ENCODE measurements at regions of chr7 and their contacts with region 1.

Region 1: GRCh38 chr7:113118074-113118959 is at the start of gene SMIM30:
- DNase-seq: peak; percentile 90 to 95
- ATAC-seq: peak; percentile 99 to 100 (median 100)
- H3K4me3 ChIP-seq: peak within 1 kb of the TSS; percentile 36 to 76 (median 62)
- H3K27ac ChIP-seq: peak within 1 kb of the TSS; percentile 65 to 90 (median 80)
- H3K4me1 ChIP-seq: peaks cover 0 to 36% (median 10%) of the 10 kb centered on the region in 9 donors
- H3K27me3 ChIP-seq: no peaks in the 10 kb centered on the region
- CTCF ChIP-seq: peak in 1 of 9 donors; percentile 15
- total RNA-seq, gene SMIM30: 87.2 to 190 (median 164) TPM

Region 2: GRCh38 chr7:112571852-112572607 is 546.3 kb before region 1 on chr7:
- intact Hi-C with region 1: loop called in 1 of 10 experiments (anchors 2 kb)
- DNase-seq: no peak
- ATAC-seq: peak in 5 of 8 donors; percentile 38 to 62 (median 54)
- H3K4me3 ChIP-seq: no peak overlapping the region
- H3K27ac ChIP-seq: peak overlapping the region in 7 of 10 donors; percentile 43 to 83 (median 65)
- H3K4me1 ChIP-seq: peaks cover 0 to 38% (median 19%) of the 10 kb centered on the region in 9 donors
- H3K27me3 ChIP-seq: no peaks in the 10 kb centered on the region
- CTCF ChIP-seq: peak in 2 of 9 donors; percentile 41 to 45

Region 3: GRCh38 chr7:112789817-112790585 is 328.3 kb before region 1 on chr7 and contains the start of gene TMEM168:
- intact Hi-C with region 1: loop called in 3 of 10 experiments (anchors 10 kb)
- DNase-seq: peak; percentile 84 to 85
- ATAC-seq: peak; percentile 91 to 96 (median 94)
- H3K4me3 ChIP-seq: peak within 1 kb of the TSS; percentile 64 to 99 (median 82)
- H3K27ac ChIP-seq: peak within 1 kb of the TSS; percentile 86 to 97 (median 91)
- H3K4me1 ChIP-seq: peaks cover 0 to 23% (median 18%) of the 10 kb centered on the region in 9 donors
- H3K27me3 ChIP-seq: no peaks in the 10 kb centered on the region
- CTCF ChIP-seq: peak in 2 of 9 donors; percentile 26
- total RNA-seq, gene TMEM168: 15.2 to 23.7 (median 18.3) TPM

Region 4: GRCh38 chr7:112939574-112940314 is 178.6 kb before region 1 on chr7:
- intact Hi-C with region 1: loop called in 2 of 10 experiments (anchors 1 to 5 kb)
- DNase-seq: peak; percentile 99
- ATAC-seq: peak; percentile 98 to 99 (median 99)
- H3K4me3 ChIP-seq: peak overlapping the region; percentile 71 to 91 (median 86)
- H3K27ac ChIP-seq: peak overlapping the region; percentile 69 to 89 (median 86)
- H3K4me1 ChIP-seq: peaks cover 0 to 45% (median 32%) of the 10 kb centered on the region in 9 donors
- H3K27me3 ChIP-seq: peaks cover 0 to 7% (median 0%) of the 10 kb centered on the region in 7 donors
- CTCF ChIP-seq: peak in 1 of 9 donors; percentile 12